Activated naive CD4-positive, alpha-beta T cell treated with anti-CD3 and anti-CD28 coated beads for 36 hours (primary cell): ENCODE measurements at regions of chr4 and their contacts with region 1.

Region 1: DNA sequence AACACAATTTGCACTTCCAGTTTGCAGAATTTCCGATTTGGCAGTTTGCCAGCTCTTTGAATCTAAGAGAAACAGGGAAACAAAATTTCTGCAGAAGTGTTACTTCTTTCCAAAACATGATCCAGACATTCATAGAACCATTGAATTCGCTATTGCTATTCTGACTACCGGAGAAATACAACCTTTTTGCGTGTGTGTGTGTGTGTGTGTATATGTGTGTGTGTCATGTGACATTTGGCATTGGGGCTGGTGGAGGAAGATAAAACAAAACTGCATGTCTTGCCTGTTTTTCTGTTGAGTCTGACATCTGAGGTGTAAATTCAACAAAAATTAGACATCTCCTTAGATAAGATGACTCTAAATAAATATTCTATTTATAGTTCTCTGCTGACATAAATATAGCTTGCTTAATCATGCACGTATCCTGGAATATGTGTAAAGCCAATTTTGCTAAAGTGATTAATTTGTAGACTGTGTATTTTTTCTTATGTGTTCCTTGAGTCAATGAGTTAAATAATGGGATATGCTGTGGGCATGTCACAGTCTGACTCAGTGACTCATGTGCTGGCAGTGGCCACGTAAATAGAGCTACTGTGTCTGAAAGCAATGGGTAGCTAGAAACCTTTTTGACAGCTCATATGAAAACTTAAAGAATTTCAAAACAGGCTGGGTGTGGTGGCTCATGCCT is 98.9 kb downstream of the HPGD start:
- DNase-seq: peak; percentile 38
- H3K4me3 Mint-ChIP-seq: no peak overlapping the region
- H3K27ac Mint-ChIP-seq: no peak overlapping the region
- H3K4me1 Mint-ChIP-seq: peaks cover 20% of the 10 kb centered on the region
- H3K27me3 Mint-ChIP-seq: peaks cover 5% of the 10 kb centered on the region

Region 2: GRCh38 chr4:174394915-174395314 is 28.5 kb before region 1 on chr4:
- CTCF ChIA-PET with region 1: no interaction called
- intact Hi-C with region 1: no loop called
- DNase-seq: no peak
- H3K4me3 Mint-ChIP-seq: no peak overlapping the region
- H3K27ac Mint-ChIP-seq: no peak overlapping the region
- H3K4me1 Mint-ChIP-seq: no peaks in the 10 kb centered on the region
- H3K27me3 Mint-ChIP-seq: peaks cover 6% of the 10 kb centered on the region

Region 3: GRCh38 chr4:174490451-174490870 is 67.1 kb after region 1 on chr4:
- CTCF ChIA-PET with region 1: no interaction called
- intact Hi-C with region 1: loop called (anchors 5 kb)
- DNase-seq: no peak
- H3K4me3 Mint-ChIP-seq: no peak overlapping the region
- H3K27ac Mint-ChIP-seq: no peak overlapping the region
- H3K4me1 Mint-ChIP-seq: no peaks in the 10 kb centered on the region
- H3K27me3 Mint-ChIP-seq: no peaks in the 10 kb centered on the region

Region 4: GRCh38 chr4:174522183-174523048 is 99.0 kb after region 1 on chr4 and contains the start of gene HPGD:
- CTCF ChIA-PET with region 1: no interaction called
- intact Hi-C with region 1: loop called (anchors 5 kb)
- DNase-seq: peak; percentile 73
- H3K4me3 Mint-ChIP-seq: peak within 1 kb of the TSS; percentile 73
- H3K27ac Mint-ChIP-seq: peak within 1 kb of the TSS; percentile 46
- H3K4me1 Mint-ChIP-seq: peaks cover 13% of the 10 kb centered on the region
- H3K27me3 Mint-ChIP-seq: peaks cover 36% of the 10 kb centered on the region
- total RNA-seq, gene HPGD: 1.5 to 2.8 TPM

Region 5: DNA sequence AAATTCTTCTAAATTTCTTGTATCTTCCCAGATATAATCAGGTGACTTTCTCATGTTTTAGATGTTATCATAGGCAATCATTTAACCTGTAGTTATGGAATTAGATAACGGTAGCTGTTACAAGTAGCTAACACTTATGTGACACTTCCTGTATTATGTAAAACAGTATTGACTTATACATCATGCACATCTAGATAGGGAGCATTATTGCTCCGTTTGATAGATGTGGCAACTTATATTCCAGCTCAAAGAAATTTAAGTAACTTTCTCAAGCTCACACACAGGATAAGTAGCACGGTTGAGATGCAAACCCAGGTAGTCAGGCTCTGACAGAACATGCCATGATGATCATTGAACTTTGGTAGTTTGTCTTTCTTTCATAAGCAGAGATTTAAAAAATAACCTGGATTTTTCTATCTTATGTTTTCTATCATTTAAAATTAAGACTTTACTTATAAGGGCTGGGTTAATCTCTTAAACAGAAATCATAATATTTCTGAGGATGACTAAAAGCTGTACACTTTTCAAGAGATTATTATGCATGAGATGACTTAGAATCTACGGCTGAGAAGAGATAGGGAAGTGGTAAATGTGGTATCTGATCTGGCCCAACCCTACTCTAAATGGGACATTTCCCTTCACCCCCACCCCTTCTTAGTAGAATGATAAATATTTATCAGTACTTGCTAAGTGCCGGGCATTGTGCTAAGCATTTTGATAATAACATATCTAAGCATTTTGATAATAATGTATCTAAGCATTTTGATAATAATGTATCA is 168.0 kb after region 1 on chr4:
- CTCF ChIA-PET with region 1: no interaction called
- intact Hi-C with region 1: loop called (anchors 1 kb)
- DNase-seq: no peak
- H3K4me3 Mint-ChIP-seq: no peak overlapping the region
- H3K27ac Mint-ChIP-seq: no peak overlapping the region
- H3K4me1 Mint-ChIP-seq: peaks cover 7% of the 10 kb centered on the region
- H3K27me3 Mint-ChIP-seq: no peaks in the 10 kb centered on the region